Activated naive CD4-positive, alpha-beta T cell treated with anti-CD3 and anti-CD28 coated beads for 36 hours (primary cell): ENCODE measurements at regions of chr4 and their contacts with region 1.

Region 1: DNA sequence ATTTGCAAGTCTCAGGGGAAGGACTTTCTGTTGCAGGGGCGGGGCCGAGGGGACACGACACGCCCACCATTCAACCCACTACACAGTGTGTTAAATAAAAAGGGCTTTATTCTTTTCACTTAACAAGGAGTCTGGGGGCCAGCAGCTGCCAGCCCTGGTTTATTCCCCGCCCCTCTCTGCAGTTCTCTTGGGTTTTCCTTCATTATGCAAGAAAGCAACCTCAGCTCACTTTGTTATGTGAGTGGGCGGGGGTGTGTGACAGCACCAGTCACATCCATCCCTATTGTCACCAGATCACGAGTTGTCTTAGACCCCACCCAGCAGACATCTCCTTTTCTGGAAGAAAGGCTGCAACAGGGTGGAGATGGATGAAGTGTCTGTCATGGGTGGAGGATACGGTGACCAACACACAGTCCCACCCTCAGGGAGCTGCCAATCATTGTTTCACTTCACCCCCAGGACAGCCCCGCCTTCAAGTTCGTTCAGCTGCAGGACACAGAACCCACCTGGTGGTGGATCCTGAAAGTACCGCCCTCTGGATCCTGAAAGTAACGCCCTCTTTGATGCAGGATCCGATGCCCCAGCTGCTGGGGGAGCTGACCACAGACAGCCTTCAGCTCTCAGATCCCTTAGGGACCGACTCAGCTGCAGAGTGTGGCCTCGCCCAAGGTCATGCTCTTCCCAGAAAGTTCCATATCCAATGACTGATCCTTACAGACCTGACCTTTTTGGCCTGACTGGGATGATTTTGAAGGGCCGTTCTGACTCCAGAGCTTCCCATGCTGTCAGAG is 79.6 kb downstream of the SMIM20 start:
- DNase-seq: peak; percentile 34
- H3K4me3 Mint-ChIP-seq: no peak overlapping the region
- H3K27ac Mint-ChIP-seq: no peak overlapping the region
- H3K4me1 Mint-ChIP-seq: peaks cover 7% of the 10 kb centered on the region
- H3K27me3 Mint-ChIP-seq: no peaks in the 10 kb centered on the region

Region 2: DNA sequence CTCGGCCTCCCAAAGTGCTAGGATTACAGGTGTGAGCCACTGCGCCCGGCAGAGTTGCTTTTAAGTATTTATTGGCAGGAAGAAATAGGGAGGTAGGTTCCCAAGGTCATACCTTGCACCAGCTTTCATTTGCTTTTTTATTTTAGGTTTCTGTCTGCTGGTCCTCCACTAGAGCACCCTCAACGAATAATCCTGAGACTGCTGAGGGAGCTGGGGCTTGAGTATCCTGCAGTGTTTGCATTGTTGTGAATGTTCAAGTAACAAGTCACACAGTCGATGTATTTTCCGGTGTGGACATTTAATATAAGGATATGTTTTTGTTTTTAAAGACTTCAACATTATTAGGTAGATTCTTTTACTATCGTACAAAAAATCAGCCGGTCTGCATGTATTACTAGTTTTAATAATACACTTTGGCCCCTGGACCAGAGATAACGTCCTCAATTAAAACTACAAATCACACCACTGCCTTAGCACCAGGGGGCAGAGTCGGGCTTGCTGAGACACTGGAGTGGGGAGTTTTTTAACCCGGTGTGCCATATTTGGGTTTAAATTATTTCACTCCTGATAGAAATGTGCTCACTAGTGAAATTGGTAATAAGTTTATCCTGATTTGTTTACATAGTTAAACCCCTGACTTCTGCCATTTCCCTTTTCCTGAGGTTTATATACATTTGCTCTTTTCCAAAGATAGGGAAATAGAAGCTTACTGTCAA is 67.9 kb before region 1 on chr4:
- CTCF ChIA-PET with region 1: interaction called, 20 read pairs
- intact Hi-C with region 1: no loop called
- DNase-seq: peak; percentile 52
- H3K4me3 Mint-ChIP-seq: no peak overlapping the region
- H3K27ac Mint-ChIP-seq: no peak overlapping the region
- H3K4me1 Mint-ChIP-seq: peaks cover 3% of the 10 kb centered on the region
- H3K27me3 Mint-ChIP-seq: no peaks in the 10 kb centered on the region

Region 3: DNA sequence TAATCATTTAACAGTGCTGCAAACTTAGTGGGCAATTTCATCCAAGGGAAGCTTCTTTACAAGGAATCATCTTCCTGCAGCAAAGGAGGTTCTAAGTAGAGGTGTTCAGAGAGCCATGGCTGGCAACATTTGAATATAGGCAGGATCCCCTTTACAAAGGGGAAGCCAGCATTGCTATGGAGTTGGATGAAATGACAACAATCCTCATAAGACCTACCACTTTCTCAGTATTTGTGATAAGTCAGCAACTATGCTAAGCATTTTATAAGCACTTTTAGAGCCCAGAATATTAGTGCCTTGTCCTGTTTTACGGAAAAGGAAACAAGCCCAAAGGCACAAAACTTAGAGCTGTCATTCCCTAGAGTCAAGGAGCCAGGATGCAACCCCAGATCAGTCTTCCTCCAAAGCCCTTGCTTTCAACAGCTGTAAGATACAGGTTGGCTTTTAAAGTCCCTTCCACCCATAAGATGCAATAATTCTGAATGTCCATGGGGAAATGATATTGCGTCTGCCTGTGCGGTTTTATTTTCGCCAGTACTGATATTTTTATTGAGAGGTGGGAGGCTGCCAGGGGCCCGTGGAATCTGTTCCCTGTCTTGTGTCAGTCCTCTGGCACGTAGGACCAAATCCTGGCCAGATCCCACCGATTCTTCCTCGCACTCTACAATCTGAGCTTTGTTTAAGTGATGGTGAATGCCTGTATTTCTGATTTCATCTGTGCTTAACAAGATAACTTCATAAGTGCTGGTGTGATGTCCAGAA is 20.4 kb before region 1 on chr4:
- CTCF ChIA-PET with region 1: interaction called, 12 read pairs
- intact Hi-C with region 1: no loop called
- DNase-seq: no peak
- H3K4me3 Mint-ChIP-seq: no peak overlapping the region
- H3K27ac Mint-ChIP-seq: no peak overlapping the region
- H3K4me1 Mint-ChIP-seq: no peaks in the 10 kb centered on the region
- H3K27me3 Mint-ChIP-seq: peaks cover 7% of the 10 kb centered on the region

Region 4: GRCh38 chr4:26005764-26006163 is 12.2 kb after region 1 on chr4:
- CTCF ChIA-PET with region 1: interaction called, 23 read pairs
- intact Hi-C with region 1: no loop called
- DNase-seq: no peak
- H3K4me3 Mint-ChIP-seq: no peak overlapping the region
- H3K27ac Mint-ChIP-seq: no peak overlapping the region
- H3K4me1 Mint-ChIP-seq: no peaks in the 10 kb centered on the region
- H3K27me3 Mint-ChIP-seq: peaks cover 8% of the 10 kb centered on the region

Region 5: DNA sequence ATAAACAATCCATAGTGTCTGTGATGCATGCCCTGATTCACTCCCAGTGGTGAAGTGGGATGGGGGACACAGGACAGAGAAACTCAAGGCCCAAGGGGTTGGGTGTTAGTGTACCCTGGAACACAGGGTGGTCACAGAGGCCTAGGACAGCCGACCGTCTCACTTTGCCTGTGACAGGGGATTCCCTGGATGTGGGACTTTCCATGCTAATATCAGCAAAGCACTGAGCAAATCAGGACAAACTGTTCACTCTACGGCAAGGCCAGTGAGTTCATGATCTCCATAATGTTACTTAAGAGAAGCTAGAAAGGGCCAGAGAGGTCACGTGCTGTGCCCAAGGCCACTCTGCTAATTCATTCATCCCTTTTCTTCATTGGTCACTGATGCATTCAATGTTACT is 168.5 kb after region 1 on chr4:
- CTCF ChIA-PET with region 1: no interaction called
- intact Hi-C with region 1: no loop called
- DNase-seq: no peak
- H3K4me3 Mint-ChIP-seq: no peak overlapping the region
- H3K27ac Mint-ChIP-seq: no peak overlapping the region
- H3K4me1 Mint-ChIP-seq: no peaks in the 10 kb centered on the region
- H3K27me3 Mint-ChIP-seq: no peaks in the 10 kb centered on the region

Region 6: GRCh38 chr4:26325191-26325590 is 331.6 kb after region 1 on chr4:
- CTCF ChIA-PET with region 1: interaction called, 8 read pairs
- intact Hi-C with region 1: loop called (anchors 1 kb)
- DNase-seq: peak; percentile 46
- H3K4me3 Mint-ChIP-seq: peak overlapping the region; percentile 31
- H3K27ac Mint-ChIP-seq: no peak overlapping the region
- H3K4me1 Mint-ChIP-seq: peaks cover 39% of the 10 kb centered on the region
- H3K27me3 Mint-ChIP-seq: no peaks in the 10 kb centered on the region

Region 7: DNA sequence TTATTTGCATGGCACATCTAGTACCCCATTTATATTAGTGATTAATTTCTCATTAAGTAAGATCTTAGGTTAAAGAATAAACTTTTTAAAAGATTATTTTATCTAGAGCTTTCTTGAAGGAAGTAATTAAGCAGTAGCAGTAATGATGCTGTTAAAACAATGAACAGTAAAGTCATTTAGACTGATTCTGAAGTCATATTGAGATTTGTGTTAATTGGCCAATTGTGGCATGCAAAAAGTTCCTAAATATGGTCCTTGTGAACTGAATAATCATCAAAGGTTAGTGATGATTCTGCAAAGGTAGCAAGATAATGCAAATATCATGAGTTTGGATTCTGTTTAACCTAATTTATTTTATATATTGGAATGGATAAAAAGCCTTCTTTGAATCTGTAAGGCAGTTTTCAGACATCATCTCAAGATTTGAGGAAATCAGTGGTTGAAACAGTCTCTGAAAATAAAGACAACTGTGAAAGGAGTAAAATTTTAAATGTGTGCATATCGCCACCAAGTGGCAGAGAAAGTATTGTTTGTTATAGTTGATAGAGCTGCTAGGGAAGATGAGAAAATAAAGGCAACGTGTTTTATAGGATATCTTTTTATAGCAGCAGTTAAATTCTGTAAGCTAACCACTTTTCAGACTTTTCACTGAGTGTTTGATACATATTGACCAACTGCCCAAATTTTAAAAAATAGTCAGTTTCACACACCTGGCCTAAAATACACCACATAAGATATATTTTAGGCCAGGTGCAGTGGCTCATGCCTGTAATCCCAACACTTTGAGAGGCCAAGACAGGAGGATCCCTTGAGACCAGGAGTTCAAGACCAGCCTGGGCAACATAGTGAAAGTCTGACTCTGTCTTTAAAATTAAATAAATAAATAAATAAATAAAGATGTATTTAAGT is 417.0 kb after region 1 on chr4:
- CTCF ChIA-PET with region 1: interaction called, 5 read pairs
- intact Hi-C with region 1: loop called (anchors 1 kb)
- DNase-seq: peak; percentile 49
- H3K4me3 Mint-ChIP-seq: no peak overlapping the region
- H3K27ac Mint-ChIP-seq: no peak overlapping the region
- H3K4me1 Mint-ChIP-seq: peaks cover 5% of the 10 kb centered on the region
- H3K27me3 Mint-ChIP-seq: no peaks in the 10 kb centered on the region